ENCODE measurements at regions of chr12 and their contacts with region 1.

Region 1: GRCh38 chr12:25997201-25997963 is 38.9 kb downstream of the RASSF8 start:
- DNase-seq: peak; percentile 96
- H3K4me3 ChIP-seq: peak overlapping the region in 1 of 3 experiments; percentile 69
- H3K27ac ChIP-seq: peak overlapping the region; percentile 97
- H3K4me1 ChIP-seq: peaks cover 31% of the 10 kb centered on the region
- H3K27me3 ChIP-seq: no peaks in the 10 kb centered on the region
- CTCF ChIP-seq: no peak
- POLR2A ChIP-seq: no peak

Region 2: DNA sequence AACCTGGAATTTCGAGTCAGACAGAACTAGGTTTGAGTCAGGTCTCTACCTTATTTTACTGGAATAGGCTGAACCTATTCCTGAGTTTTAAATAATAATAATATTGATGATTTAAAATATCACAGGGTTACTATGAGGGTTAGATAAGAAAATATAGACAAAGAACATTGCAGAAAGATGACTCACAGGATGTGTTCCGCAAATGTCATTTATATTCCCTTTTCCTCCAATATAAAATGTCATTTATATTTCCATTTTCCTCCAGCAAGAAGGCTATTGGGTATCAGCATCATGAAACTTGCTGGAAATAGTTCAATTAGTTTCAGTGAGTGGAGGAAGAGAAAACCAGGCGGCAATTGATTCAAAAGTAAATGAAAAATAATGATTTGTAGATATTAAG is 202.8 kb before region 1 on chr12:
- CTCF ChIA-PET with region 1: no interaction called
- POLR2A ChIA-PET with region 1: no interaction called
- dilution Hi-C with region 1: no loop called
- intact Hi-C with region 1: loop called (anchors 1 kb)
- DNase-seq: peak; percentile 65
- H3K4me3 ChIP-seq: no peak overlapping the region
- H3K27ac ChIP-seq: peak overlapping the region; percentile 85
- H3K4me1 ChIP-seq: peaks cover 24% of the 10 kb centered on the region
- H3K27me3 ChIP-seq: no peaks in the 10 kb centered on the region
- CTCF ChIP-seq: no peak
- POLR2A ChIP-seq: no peak

Region 3: DNA sequence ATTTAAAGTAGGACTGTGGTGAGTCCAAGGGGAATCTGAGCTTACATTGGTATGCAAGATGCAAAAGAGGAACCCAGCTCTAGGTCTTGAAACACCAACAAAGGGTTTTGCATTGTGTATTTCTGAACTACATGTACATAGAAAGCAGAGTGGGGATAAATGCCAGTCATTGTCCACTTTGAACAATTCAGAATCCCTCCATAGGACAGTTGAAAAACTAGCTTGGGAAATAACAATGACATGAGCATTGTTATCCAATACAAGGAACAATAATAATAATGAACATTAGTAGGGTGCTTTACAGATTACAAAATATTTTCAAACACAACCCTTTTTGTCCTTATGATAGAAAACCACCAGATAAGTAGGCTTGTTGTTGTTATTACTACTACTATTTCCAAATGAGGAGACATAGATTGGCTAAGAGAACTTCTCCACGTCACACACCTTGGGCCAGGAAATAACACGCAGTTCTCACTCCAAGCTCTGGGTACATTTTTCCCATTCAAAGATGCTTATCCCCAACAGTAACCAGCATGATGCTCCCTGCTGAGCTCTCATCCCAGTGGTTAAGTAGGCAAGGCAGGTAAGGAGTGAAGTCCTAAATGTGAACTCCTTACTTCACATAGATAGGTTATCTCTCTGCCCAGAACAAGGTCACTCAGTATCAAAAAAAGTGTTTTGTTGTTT is 90.6 kb before region 1 on chr12:
- CTCF ChIA-PET with region 1: no interaction called
- POLR2A ChIA-PET with region 1: no interaction called
- dilution Hi-C with region 1: no loop called
- intact Hi-C with region 1: no loop called
- DNase-seq: no peak
- H3K4me3 ChIP-seq: no peak overlapping the region
- H3K27ac ChIP-seq: no peak overlapping the region
- H3K4me1 ChIP-seq: no peaks in the 10 kb centered on the region
- H3K27me3 ChIP-seq: no peaks in the 10 kb centered on the region
- CTCF ChIP-seq: no peak
- POLR2A ChIP-seq: no peak

Region 4: GRCh38 chr12:25985296-25986175 is 11.8 kb before region 1 on chr12:
- CTCF ChIA-PET with region 1: interaction called, 5 read pairs
- POLR2A ChIA-PET with region 1: interaction called, 5 read pairs
- dilution Hi-C with region 1: no loop called
- intact Hi-C with region 1: loop called (anchors 1 kb)
- DNase-seq: no peak
- H3K4me3 ChIP-seq: no peak overlapping the region
- H3K27ac ChIP-seq: no peak overlapping the region
- H3K4me1 ChIP-seq: peaks cover 17% of the 10 kb centered on the region
- H3K27me3 ChIP-seq: no peaks in the 10 kb centered on the region
- CTCF ChIP-seq: no peak
- POLR2A ChIP-seq: no peak